Sigmoid colon (tissue), 7 donors: ENCODE measurements at regions of chr3 and their contacts with region 1.

Region 1: DNA sequence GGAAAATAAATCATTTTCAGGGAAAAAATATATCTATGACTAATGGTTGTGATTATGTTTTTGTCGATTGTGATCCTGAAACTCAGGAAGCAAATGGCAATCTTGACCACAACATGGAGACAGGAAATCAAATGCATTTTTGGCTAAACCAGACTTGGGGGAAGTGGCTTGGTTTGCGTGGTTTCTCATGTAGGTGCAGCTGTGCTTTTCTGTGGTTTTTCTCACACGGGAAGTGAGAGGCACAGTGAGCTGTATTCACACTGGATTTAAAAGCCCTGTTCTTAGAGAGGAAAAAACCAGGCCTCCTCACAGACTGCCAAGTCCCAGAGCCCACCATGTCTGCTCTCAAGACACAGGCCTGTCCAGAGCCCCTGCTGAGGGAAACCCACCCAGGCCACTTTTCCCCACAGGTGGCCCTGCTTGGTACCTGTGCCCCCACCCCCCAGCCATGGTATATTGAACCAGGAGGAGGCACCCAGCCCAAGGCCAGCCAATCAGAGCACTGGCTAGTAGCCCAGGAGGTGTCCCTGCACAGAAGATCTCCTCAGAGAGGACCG is 46.1 kb downstream of the BTD start:
- DNase-seq: no peak
- H3K4me3 ChIP-seq: no peak overlapping the region
- H3K27ac ChIP-seq: peak overlapping the region; percentile 77 to 83 (median 82)
- H3K4me1 ChIP-seq: peaks cover 0 to 36% (median 30%) of the 10 kb centered on the region in 4 donors
- H3K27me3 ChIP-seq: no peaks in the 10 kb centered on the region
- CTCF ChIP-seq: no peak
- EP300 ChIP-seq: no peak
- POLR2A ChIP-seq: no peak

Region 2: GRCh38 chr3:15726043-15726442 is 78.4 kb after region 1 on chr3:
- intact Hi-C with region 1: no loop called
- DNase-seq: no peak
- H3K4me3 ChIP-seq: no peak overlapping the region
- H3K27ac ChIP-seq: no peak overlapping the region
- H3K4me1 ChIP-seq: peaks cover 0 to 9% (median 4%) of the 10 kb centered on the region in 4 donors
- H3K27me3 ChIP-seq: no peaks in the 10 kb centered on the region
- CTCF ChIP-seq: no peak
- EP300 ChIP-seq: no peak
- POLR2A ChIP-seq: no peak

Region 3: GRCh38 chr3:15743587-15744009 is 95.9 kb after region 1 on chr3:
- intact Hi-C with region 1: loop called (anchors 5 kb)
- DNase-seq: no peak
- H3K4me3 ChIP-seq: no peak overlapping the region
- H3K27ac ChIP-seq: peak overlapping the region in 3 of 4 donors; percentile 0 to 23 (median 6)
- H3K4me1 ChIP-seq: peaks cover 0 to 7% (median 4%) of the 10 kb centered on the region in 4 donors
- H3K27me3 ChIP-seq: no peaks in the 10 kb centered on the region
- CTCF ChIP-seq: no peak
- EP300 ChIP-seq: no peak
- POLR2A ChIP-seq: no peak

Region 4: GRCh38 chr3:16589867-16590624 is 942.4 kb after region 1 on chr3:
- intact Hi-C with region 1: no loop called
- DNase-seq: no peak
- H3K4me3 ChIP-seq: no peak overlapping the region
- H3K27ac ChIP-seq: no peak overlapping the region
- H3K4me1 ChIP-seq: no peaks in the 10 kb centered on the region
- H3K27me3 ChIP-seq: no peaks in the 10 kb centered on the region
- CTCF ChIP-seq: no peak
- EP300 ChIP-seq: no peak
- POLR2A ChIP-seq: no peak